OCI-LY7 (cell line): ENCODE measurements at regions of chr15 and their contacts with region 1.

Region 1: GRCh38 chr15:56052395-56053045 is 59.1 kb upstream of the NEDD4 start:
- DNase-seq: peak; percentile 60
- H3K4me3 ChIP-seq: no peak overlapping the region
- H3K27ac ChIP-seq: no peak overlapping the region
- H3K4me1 ChIP-seq: no peaks in the 10 kb centered on the region
- CTCF ChIP-seq: peak; percentile 93

Region 2: DNA sequence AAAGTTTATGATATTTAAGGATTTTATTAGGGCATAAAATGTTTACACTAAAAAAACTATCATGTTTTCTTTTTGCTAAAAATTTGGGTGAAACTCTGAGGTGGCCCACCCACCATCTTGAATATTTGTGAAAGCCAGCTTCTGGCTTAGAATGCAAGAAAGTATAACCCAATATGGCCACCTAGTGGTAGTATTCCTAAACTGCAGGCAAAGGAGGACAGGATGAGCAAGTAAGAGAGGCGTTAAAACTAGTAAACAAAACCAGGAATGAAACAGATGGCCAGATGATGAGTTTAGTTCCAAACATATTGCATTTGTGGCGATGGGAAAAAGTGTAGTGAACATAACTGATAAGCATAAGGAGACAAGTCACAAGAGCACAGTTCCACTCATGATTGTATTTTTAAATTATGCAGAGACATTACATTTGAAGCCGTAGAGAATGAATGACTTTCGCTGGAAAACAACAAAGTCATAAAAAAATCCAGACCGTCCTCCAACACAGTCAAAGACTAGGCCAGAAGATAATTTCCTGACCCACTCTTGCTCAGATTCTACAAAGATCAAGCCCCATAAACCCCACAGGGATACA is 206.3 kb before region 1 on chr15:
- CTCF ChIA-PET with region 1: no interaction called
- POLR2A ChIA-PET with region 1: no interaction called
- intact Hi-C with region 1: loop called (anchors 10 kb)
- DNase-seq: peak; percentile 71
- H3K4me3 ChIP-seq: no peak overlapping the region
- H3K27ac ChIP-seq: no peak overlapping the region
- H3K4me1 ChIP-seq: no peaks in the 10 kb centered on the region
- CTCF ChIP-seq: peak; percentile 95

Region 3: GRCh38 chr15:56017920-56018319 is 34.6 kb before region 1 on chr15:
- CTCF ChIA-PET with region 1: no interaction called
- POLR2A ChIA-PET with region 1: no interaction called
- intact Hi-C with region 1: no loop called
- DNase-seq: no peak
- H3K4me3 ChIP-seq: no peak overlapping the region
- H3K27ac ChIP-seq: no peak overlapping the region
- H3K4me1 ChIP-seq: no peaks in the 10 kb centered on the region
- CTCF ChIP-seq: no peak